Pancreas (tissue), 10 donors: ENCODE measurements at regions of chr9 and their contacts with region 1.

Region 1: GRCh38 chr9:136790927-136791641 is at the start of gene TMEM141:
- DNase-seq: peak; percentile 99 to 100 (median 100)
- ATAC-seq: peak; percentile 86 to 93 (median 88)
- H3K4me3 ChIP-seq: peak within 1 kb of the TSS; percentile 22 to 69 (median 52)
- H3K27ac ChIP-seq: peak within 1 kb of the TSS; percentile 90 to 96 (median 94)
- H3K4me1 ChIP-seq: peaks cover 25 to 41% (median 26%) of the 10 kb centered on the region in 3 donors
- H3K27me3 ChIP-seq: no peaks in the 10 kb centered on the region
- CTCF ChIP-seq: no peak
- total RNA-seq, gene TMEM141: 29.2 to 53.1 (median 34.2) TPM

Region 2: GRCh38 chr9:136614372-136614922 is 176.6 kb before region 1 on chr9:
- intact Hi-C with region 1: no loop called
- DNase-seq: peak in 1 of 6 donors; percentile 68
- ATAC-seq: peak in 2 of 4 donors; percentile 9 to 37
- H3K4me3 ChIP-seq: no peak overlapping the region
- H3K27ac ChIP-seq: peak overlapping the region in 1 of 4 donors; percentile 6
- H3K4me1 ChIP-seq: peaks cover 0 to 2% (median 0%) of the 10 kb centered on the region in 3 donors
- H3K27me3 ChIP-seq: no peaks in the 10 kb centered on the region
- CTCF ChIP-seq: no peak

Region 3: GRCh38 chr9:136694236-136694942 is 96.7 kb before region 1 on chr9:
- intact Hi-C with region 1: no loop called
- DNase-seq: peak; percentile 73 to 90 (median 83)
- ATAC-seq: peak; percentile 51 to 64 (median 54)
- H3K4me3 ChIP-seq: no peak overlapping the region
- H3K27ac ChIP-seq: peak overlapping the region; percentile 74 to 91 (median 90)
- H3K4me1 ChIP-seq: peaks cover 70 to 82% (median 70%) of the 10 kb centered on the region in 3 donors
- H3K27me3 ChIP-seq: no peaks in the 10 kb centered on the region
- CTCF ChIP-seq: peak; percentile 42 to 62 (median 56)

Region 4: DNA sequence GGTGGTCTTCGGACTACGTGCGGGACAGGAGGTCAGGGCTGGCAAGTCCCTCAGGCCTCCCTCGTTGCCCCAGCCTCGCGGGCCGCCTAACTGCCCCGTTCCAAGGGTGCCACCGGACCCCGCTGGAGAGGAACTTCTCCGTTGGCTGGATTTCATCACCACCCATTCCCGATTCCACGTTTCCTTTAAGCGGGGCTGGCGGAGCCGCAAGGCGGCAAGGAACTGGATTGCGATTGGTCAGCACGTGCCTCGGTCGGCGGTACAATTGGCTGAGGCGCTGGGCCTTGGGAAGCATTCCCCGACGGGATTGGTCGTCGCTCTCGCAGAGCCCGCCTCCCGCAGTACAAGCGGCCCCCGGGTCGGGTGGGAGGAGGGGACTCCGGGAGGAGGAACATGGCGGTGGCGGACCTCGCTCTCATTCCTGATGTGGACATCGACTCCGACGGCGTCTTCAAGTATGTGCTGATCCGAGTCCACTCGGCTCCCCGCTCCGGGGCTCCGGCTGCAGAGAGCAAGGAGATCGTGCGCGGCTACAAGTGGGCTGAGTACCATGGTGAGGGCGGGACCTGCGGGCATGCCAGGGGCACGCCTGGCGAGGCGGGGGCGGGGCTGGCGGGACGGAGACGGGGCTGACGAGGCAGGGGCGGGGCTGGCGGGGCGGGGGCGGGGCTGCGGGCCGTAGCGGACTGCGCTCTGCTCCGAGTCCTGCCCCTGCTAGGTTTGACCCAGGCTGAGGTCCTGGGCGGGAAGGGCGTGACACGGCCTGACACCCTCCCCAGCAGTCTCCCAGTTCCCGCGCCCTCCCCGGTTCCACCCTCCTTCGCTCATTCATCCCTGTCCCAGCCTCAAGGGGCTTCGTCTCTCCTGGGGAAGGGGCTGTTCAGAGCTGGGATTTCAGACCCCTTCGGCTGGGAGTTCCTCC is 58.2 kb after region 1 on chr9 and contains the start of gene PHPT1:
- intact Hi-C with region 1: loop called in 1 of 3 experiments (anchors 10 kb)
- DNase-seq: peak; percentile 96 to 100 (median 99)
- ATAC-seq: peak; percentile 80 to 90 (median 82)
- H3K4me3 ChIP-seq: peak within 1 kb of the TSS; percentile 66 to 94 (median 90)
- H3K27ac ChIP-seq: peak within 1 kb of the TSS; percentile 74 to 93 (median 90)
- H3K4me1 ChIP-seq: peaks cover 24 to 25% (median 24%) of the 10 kb centered on the region in 3 donors
- H3K27me3 ChIP-seq: no peaks in the 10 kb centered on the region
- CTCF ChIP-seq: no peak
- total RNA-seq, gene PHPT1: 75.2 to 95.5 (median 79.0) TPM

Region 5: DNA sequence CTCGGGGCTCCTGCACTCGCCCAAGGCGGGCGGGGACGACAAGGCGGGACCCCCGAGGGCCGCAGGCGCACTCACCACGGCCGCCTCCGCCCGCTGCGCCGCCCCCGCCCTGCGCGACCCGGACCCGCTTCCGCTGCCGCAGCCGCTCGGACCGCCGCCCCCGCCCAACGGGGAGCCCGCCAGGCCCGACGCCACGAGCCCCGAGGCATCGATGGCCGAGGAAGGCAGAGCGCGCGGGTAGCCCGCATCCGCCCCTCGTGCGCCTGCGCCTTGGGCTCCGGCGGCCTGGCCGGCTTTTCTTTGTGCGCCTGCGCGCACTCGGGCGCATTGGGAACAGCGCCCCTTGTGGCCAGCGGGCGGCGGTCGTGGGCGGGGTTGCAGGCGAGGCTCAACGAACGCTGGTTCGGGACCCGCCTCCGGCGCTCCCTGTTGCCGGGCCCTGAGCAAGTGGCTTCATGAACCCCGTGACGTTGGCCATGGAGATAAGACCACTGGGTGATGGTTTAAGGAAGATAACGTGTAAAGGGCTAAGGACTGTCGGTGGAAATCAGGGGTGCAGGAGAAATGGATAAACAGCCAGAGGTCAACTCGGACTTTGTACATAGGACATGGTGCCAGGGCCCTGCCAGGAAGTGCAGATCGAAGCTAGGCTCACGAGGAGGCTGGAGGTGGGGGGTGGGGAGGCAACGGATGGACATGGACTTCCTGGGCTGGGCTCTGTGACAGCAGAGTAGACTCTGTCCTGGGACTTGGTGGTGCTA is 153.6 kb after region 1 on chr9 and contains the starts of genes C8G and FBXW5:
- intact Hi-C with region 1: loop called in 1 of 3 experiments (anchors 10 kb)
- DNase-seq: peak; percentile 92 to 99 (median 97)
- ATAC-seq: peak; percentile 87 to 88 (median 87)
- H3K4me3 ChIP-seq: peak within 1 kb of the TSS; percentile 85 to 92 (median 88)
- H3K27ac ChIP-seq: peak within 1 kb of the TSS; percentile 35 to 75 (median 69)
- H3K4me1 ChIP-seq: peaks cover 0 to 10% (median 0%) of the 10 kb centered on the region in 3 donors
- H3K27me3 ChIP-seq: no peaks in the 10 kb centered on the region
- CTCF ChIP-seq: peak; percentile 98 to 100 (median 99)
- total RNA-seq, gene C8G: 0.24 to 1.2 (median 0.43) TPM in 5 of 6 donors, not detected in the other
- total RNA-seq, gene FBXW5: 56.2 to 80.2 (median 60.4) TPM